GM23248 (cell line): ENCODE measurements at regions of chr19 and their contacts with region 1.

Region 1: DNA sequence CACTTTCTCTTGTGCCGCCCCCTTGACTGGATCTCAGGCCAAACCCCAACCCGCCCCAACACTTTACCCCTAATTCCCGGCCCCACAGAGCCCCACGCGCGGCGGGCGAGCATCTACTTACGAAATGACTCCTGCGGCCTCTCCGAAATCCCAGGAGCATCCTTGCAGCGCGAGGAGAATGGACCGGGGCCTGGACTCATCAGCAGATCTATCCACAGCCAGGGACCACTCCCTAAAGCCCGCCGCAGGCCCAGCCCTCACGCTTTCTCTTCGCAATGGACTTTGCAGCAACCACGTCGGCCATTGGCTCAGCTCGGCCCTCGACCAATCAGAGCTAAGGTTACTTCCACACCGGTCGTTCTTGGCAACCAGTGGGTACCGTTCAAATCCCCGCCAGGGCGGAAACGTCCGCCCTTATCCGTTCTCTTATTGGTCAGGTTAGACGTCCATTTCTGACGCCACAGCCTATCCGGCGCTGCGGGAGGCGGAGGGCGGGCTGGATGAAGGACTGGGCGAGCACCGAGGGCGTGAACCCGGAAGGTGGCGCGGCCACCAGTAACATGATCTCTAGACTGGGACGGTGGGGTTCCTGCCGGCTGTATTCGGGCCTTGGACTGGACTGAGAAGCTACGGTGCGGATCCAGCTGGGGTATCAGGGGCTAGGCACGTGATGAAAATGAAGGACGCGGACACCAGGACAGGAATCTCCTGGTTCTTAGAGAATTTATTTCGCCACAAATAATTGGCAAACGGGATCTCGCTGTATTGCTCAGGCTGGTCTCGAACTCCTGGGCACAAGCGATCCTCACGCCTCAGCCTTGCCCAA is at the starts of genes CEP89 and FAAP24:
- DNase-seq: peak; percentile 99
- H3K4me3 ChIP-seq: peak within 1 kb of the TSS; percentile 87
- H3K27ac ChIP-seq: peak within 1 kb of the TSS; percentile 67
- H3K4me1 ChIP-seq: peaks cover 8% of the 10 kb centered on the region; the same call in 1 of the 2 replicates
- H3K27me3 ChIP-seq: no peaks in the 10 kb centered on the region
- total RNA-seq, gene CEP89: 11.5 and 17.1 TPM in 2 replicates
- total RNA-seq, gene FAAP24: 1.3 and 2.4 TPM in 2 replicates

Region 2: DNA sequence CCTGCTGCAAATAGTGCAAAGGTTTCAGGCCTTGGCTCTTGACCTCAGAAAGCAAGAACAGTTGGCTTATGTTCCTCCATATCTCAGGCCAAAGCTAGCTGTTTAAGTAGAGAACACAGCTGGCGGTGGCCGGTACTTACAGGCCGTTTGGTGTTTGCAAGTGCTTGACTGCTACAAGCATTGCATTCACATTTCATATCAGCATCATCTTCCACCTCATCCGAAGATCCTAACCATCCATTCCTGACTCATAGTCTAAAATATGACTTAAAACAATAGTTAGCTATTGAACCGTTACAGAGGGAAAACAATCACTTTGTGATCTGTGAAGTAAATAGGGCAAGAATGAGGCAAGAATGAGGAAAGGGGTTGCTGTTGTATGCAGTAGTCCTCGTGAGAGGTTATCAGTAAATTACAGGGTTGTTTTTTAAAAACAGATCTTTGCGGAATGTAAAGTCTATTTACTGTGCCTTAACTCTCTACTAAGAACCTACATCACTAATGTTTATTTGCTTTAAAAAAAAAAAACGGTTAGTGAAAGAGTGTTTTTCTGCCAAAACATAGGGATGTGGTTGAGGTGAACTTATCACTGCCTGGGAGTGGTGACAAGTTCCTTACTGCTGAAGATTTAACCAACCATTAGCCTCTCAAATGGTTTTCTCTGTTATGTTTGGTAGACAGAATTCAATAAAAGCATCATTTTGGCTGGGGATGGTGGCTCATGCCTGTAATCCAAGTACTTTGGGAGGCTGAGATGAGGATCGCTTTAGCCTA is 138.4 kb after region 1 on chr19:
- in situ Hi-C with region 1: loop called (anchors 10 kb)
- DNase-seq: peak; percentile 16
- H3K4me3 ChIP-seq: no peak overlapping the region
- H3K27ac ChIP-seq: no peak overlapping the region
- H3K4me1 ChIP-seq: no peaks in the 10 kb centered on the region
- H3K27me3 ChIP-seq: no peaks in the 10 kb centered on the region